Activated CD4-positive, alpha-beta memory T cell treated with anti-CD3 and anti-CD28 coated beads, Interleukin-2, amount 10 ng/mL, durations not matched to agents 7 days and 5 days (primary cell): ENCODE measurements at regions of chr10 and their contacts with region 1.

Region 1: GRCh38 chr10:22714479-22715289 is at the start of gene PIP4K2A:
- DNase-seq: peak; percentile 82
- H3K4me3 Mint-ChIP-seq: peak within 1 kb of the TSS; percentile 85
- H3K27ac Mint-ChIP-seq: peak within 1 kb of the TSS; percentile 84
- H3K4me1 Mint-ChIP-seq: peaks cover 30% of the 10 kb centered on the region
- H3K27me3 Mint-ChIP-seq: no peaks in the 10 kb centered on the region
- total RNA-seq, gene PIP4K2A: 126 to 137 TPM

Region 2: DNA sequence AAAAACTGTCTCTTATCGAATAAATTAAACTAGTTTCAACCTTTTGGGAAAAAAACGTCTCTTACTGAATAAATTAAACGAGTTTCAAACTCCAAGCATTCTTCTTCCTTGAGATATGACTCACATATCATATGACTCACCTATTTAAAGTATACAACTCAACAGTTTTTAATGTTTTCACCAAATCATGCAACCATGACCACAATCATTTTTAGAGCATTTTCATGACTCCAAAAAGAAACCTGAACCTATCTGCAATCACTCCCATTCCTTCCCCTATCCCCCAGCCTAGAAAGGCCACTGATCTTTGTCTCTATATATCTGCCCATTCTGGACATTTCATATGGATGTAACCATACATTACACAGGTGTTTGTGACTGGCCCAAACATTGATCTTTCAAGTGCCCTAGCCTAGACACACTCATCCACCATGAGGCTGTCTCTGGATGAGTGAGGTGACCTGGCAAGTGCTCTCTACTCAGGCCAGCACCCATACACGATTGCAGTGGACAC is 115.6 kb before region 1 on chr10:
- CTCF ChIA-PET with region 1: no interaction called
- POLR2A ChIA-PET with region 1: interaction called, 23 read pairs
- DNase-seq: no peak
- H3K4me3 Mint-ChIP-seq: no peak overlapping the region
- H3K27ac Mint-ChIP-seq: peak overlapping the region; percentile 72
- H3K4me1 Mint-ChIP-seq: peaks cover 66% of the 10 kb centered on the region
- H3K27me3 Mint-ChIP-seq: no peaks in the 10 kb centered on the region

Region 3: GRCh38 chr10:22630234-22631174 is 84.2 kb before region 1 on chr10:
- CTCF ChIA-PET with region 1: interaction called, 5 read pairs
- POLR2A ChIA-PET with region 1: interaction called, 32 read pairs
- DNase-seq: peak; percentile 56
- H3K4me3 Mint-ChIP-seq: peak overlapping the region; percentile 74
- H3K27ac Mint-ChIP-seq: peak overlapping the region; percentile 97
- H3K4me1 Mint-ChIP-seq: peaks cover 95% of the 10 kb centered on the region
- H3K27me3 Mint-ChIP-seq: no peaks in the 10 kb centered on the region

Region 4: DNA sequence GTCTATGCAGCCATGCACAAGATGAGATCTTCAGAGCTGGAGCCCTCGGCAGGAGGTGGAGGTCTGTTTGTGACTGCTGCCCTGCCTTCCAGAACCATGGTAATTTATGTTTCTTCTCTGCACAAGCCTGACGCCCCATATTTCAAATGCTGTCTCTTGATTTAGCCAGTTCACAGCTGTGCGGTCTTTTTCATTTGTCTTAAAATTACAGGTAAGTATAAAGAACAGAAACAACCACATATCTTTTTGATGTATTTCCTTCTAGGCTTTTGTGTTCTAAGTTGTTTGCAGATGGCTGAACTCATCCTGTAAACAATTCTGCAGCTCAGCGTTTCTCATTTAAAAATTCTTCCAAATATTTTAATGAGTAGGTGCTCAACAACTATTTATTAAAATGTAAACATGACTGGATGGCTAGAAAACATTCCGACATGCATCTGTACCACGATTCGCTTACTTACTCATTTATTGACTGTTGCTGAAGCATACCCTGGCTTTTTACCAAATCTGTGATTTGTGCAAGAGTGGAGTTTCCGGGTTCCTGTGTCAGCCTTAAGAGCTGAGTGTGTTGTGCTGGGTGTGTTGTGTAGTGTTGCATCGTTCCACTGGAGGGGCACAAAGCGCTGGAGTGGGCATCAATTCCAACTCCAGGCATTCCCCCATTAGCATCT is 59.2 kb before region 1 on chr10:
- CTCF ChIA-PET with region 1: interaction called, 4 read pairs
- POLR2A ChIA-PET with region 1: interaction called, 26 read pairs
- DNase-seq: no peak
- H3K4me3 Mint-ChIP-seq: peak overlapping the region; percentile 36
- H3K27ac Mint-ChIP-seq: peak overlapping the region; percentile 85
- H3K4me1 Mint-ChIP-seq: peaks cover 94% of the 10 kb centered on the region
- H3K27me3 Mint-ChIP-seq: no peaks in the 10 kb centered on the region

Region 5: GRCh38 chr10:22676435-22676834 is 38.2 kb before region 1 on chr10:
- CTCF ChIA-PET with region 1: interaction called, 3 read pairs
- POLR2A ChIA-PET with region 1: interaction called, 114 read pairs
- DNase-seq: no peak
- H3K4me3 Mint-ChIP-seq: no peak overlapping the region
- H3K27ac Mint-ChIP-seq: no peak overlapping the region
- H3K4me1 Mint-ChIP-seq: peaks cover 86% of the 10 kb centered on the region
- H3K27me3 Mint-ChIP-seq: no peaks in the 10 kb centered on the region

Region 6: GRCh38 chr10:22693371-22693784 is 21.3 kb before region 1 on chr10:
- CTCF ChIA-PET with region 1: no interaction called
- POLR2A ChIA-PET with region 1: interaction called, 15 read pairs
- DNase-seq: no peak
- H3K4me3 Mint-ChIP-seq: peak overlapping the region; percentile 7
- H3K27ac Mint-ChIP-seq: peak overlapping the region; percentile 62
- H3K4me1 Mint-ChIP-seq: peaks cover 66% of the 10 kb centered on the region
- H3K27me3 Mint-ChIP-seq: no peaks in the 10 kb centered on the region